AG04449 (cell line): ENCODE measurements at regions of chr15 and their contacts with region 1.

Region 1: DNA sequence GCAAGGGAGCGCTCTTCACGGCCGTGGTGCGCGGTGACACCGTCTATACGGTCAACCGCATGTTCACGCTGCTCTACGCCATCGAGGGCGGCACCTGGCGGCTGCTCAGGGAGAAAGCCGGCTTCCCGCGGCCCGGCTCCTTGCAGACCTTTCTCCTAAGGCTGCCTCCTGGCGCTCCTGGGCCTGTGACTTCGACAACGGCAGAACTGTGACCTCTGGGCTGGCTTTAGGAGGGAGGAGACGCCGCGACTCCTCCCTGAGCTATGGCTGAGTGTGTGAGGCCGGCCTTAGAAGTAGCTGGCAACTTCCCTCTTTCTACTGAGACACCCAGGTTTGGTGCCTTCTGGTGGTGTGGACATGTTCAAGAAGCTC is 1.4 kb downstream of the KBTBD13 start:
- DNase-seq: no peak
- H3K4me3 ChIP-seq: no peak overlapping the region
- CTCF ChIP-seq: peak; percentile 85

Region 2: GRCh38 chr15:64989416-64990167 is 88.4 kb before region 1 on chr15 and contains the start of gene SPG21:
- CTCF ChIA-PET with region 1: no interaction called
- POLR2A ChIA-PET with region 1: no interaction called
- DNase-seq: peak; percentile 33
- H3K4me3 ChIP-seq: peak within 1 kb of the TSS; percentile 98
- CTCF ChIP-seq: no peak

Region 3: DNA sequence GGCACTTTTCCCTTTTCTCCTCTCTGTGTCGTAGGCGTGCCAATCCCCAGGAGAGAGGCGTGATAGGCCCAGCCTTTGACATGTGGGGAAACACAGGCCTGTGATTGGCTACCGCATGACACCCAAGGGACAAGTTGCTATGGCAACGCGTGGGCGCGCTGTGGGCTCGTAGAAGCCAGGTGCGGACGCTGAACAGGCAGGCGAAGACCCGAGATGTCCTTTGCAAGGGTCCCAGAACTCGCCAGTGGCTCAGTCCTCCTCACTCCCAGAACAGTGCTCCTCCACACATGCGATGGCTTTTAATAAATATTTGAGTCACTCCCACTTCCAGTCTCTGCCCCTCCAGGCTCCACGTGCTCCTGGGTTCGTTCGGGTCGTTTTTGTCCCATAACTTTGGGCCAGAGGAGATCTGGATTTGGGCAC is 28.5 kb before region 1 on chr15:
- CTCF ChIA-PET with region 1: interaction called, 338 read pairs
- POLR2A ChIA-PET with region 1: no interaction called
- DNase-seq: peak; percentile 50
- H3K4me3 ChIP-seq: peak overlapping the region; percentile 47
- CTCF ChIP-seq: no peak

Region 4: DNA sequence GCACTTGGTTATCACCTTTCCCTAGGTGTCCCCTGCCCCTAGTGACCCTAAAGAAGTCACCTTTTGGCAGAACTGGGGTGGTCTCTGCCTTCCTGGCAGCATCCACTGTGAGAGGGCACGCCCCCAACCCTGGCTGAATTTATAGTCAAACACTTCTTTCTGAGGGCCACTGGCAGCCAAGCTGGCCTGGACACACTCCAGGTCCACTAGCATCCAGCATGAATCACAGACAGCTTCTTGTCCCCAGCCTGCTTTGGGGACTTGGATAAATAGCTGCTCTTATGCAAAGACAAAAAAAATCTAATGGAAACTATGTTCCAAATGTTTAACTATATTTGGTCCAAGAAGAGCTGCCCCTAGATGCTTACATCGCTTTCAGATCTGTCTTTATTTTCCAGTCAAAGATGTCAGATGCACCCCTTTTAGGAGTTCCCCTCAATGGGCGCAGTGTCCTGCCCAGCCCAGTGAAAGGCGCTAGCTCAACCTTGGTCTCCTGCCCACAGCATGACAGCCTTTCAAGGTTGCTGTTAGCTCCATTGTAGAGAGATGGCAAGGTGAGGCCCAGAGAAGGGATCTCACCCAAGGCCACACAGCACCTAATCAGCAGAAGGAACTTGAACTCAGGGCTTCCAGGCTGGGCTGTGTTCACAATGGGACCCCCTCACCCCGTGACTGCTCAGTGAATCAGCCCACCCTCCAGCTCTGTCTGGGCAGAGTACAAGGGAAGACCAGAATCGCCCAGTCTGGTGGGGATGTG is 17.1 kb before region 1 on chr15:
- CTCF ChIA-PET with region 1: interaction called, 338 read pairs
- POLR2A ChIA-PET with region 1: no interaction called
- DNase-seq: no peak
- H3K4me3 ChIP-seq: no peak overlapping the region
- CTCF ChIP-seq: no peak

Region 5: DNA sequence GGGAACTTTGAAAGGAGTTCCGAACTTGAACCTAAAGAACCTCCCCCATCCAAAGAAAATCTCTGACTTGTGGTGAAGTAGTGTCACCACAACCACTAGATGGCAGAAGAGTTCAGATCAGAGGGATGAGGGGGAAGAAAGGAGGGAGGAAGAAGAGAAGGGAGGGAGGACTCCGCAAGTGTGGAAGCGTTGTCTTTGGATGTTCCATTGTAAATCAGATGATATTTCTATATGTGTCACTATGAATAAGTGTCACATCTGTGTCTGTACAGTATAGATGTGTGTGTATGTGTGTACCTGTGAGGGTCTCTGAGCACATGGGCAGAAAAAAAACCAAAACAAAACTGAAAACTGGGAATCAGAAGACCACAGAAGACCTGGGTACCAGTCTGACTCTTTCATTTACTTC is 560.7 kb after region 1 on chr15:
- CTCF ChIA-PET with region 1: no interaction called
- POLR2A ChIA-PET with region 1: no interaction called
- DNase-seq: peak; percentile 34
- H3K4me3 ChIP-seq: no peak overlapping the region
- CTCF ChIP-seq: peak; percentile 80